Dorsolateral prefrontal cortex (tissue), 120 donors: ENCODE measurements at regions of chr1 and their contacts with region 1.

Region 1: GRCh38 chr1:205141236-205142101 is 19.7 kb upstream of the RBBP5 start:
- DNase-seq: peak; percentile 47 to 88 (median 72)
- H3K4me3 ChIP-seq: peak overlapping the region in 32 of 59 donors; percentile 1 to 52 (median 23)
- H3K27ac ChIP-seq: peak overlapping the region in 45 of 59 donors; percentile 13 to 71 (median 46)
- H3K27me3 ChIP-seq: no peaks in the 10 kb centered on the region
- CTCF ChIP-seq: peak; percentile 64 to 92 (median 84)

Region 2: DNA sequence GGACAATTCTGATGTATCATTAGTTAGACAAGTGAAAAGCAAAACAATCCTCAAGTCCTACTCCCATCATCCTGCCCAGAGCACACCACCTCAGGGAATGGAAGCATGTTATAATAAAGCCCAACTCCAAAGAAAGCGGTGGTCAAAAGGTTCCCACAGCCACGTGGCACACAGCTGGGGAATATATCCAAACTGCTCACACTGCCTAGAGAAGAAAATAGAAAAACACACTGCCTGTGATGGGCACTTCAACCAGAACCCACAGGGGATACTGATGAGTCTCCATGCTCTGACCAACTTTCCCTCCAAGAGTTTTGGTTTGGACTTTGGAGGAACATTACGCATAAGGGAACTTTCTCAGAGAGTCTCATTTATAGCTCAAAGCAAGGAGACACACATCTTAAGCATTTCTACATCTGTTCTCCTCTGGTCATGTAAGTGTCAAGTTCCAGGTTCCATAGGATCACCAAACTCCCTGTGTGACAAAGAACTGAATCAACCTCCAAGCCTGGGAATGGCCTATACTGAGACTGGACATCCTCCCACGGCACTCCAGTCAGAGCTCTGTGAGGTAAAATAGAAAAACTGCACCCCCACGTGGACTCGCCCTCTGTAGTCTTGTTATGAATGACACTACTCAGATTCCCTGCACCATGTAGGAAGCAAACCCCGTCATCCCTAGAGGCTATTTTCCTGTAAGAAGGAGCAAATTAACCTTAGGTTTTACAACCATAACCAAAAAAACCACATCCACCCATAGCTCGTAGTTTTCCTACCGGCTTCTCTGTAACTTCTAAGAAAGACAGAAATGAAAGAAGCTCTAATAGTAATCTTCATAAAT is 57.8 kb after region 1 on chr1:
- intact Hi-C with region 1: loop called in 1 of 2 experiments (anchors 10 kb)
- DNase-seq: peak in 1 of 10 donors; percentile 57
- H3K4me3 ChIP-seq: no peak overlapping the region
- H3K27ac ChIP-seq: peak overlapping the region in 4 of 59 donors; percentile 1 to 17 (median 4)
- H3K27me3 ChIP-seq: no peaks in the 10 kb centered on the region
- CTCF ChIP-seq: peak in 13 of 56 donors; percentile 7 to 48 (median 17)